Left ventricle myocardium superior (tissue), 1 donor: ENCODE measurements at regions of chr6 and their contacts with region 1.

Region 1: GRCh38 chr6:144423167-144423566 is 138.0 kb downstream of the UTRN start:
- DNase-seq: no peak
- ATAC-seq: no peak

Region 2: GRCh38 chr6:144284783-144285547 is 138.2 kb before region 1 on chr6 and contains the start of gene UTRN:
- intact Hi-C with region 1: loop called (anchors 10 kb)
- DNase-seq: peak; percentile 89
- ATAC-seq: peak; percentile 85
- total RNA-seq, gene UTRN: 72.0 TPM